BJ (cell line): ENCODE measurements at regions of chr20 and their contacts with region 1.

Region 1: DNA sequence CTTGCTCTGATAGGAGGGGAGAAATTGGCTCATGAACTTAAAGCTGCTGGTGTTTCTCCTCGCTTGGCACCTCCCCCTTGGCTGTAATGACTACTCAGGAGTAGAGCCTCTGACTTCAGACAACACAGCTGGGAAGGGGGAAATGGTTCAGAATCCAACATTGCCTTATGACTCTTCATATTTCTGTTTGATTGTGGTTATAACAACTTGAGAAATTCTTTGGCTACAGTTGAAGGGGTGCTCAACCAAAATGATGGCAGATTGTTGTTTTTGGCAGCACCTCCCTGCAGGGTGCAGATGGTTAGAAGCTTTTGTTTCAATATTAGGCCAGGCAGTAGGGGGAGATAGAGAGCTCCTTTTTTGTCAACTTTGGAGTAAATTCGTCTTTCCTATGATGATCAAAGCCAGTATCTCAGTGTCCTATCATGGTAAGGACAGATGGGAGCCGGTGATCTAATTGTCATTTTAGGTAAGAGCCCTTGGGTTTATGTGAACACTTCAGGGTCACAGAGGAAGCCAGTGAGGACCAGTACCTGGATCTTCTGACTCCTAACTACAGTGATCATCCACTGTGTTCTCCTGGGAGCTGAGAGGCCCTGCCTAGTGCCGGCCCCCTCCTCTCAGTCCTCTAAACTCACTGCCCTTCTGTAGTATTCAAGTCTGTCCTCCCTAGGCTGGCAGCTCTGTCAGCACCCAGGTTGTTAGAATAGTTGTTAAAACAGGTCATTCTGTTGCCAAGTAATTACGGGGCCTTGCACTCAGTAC is 39.9 kb downstream of the RPRD1B start:
- DNase-seq: peak; percentile 77
- H3K4me3 ChIP-seq: no peak overlapping the region
- H3K27me3 ChIP-seq: no peaks in the 10 kb centered on the region
- CTCF ChIP-seq: peak; percentile 76

Region 2: GRCh38 chr20:38057351-38057972 is 16.0 kb before region 1 on chr20:
- CTCF ChIA-PET with region 1: interaction called, 22 read pairs
- POLR2A ChIA-PET with region 1: no interaction called
- DNase-seq: no peak
- H3K4me3 ChIP-seq: no peak overlapping the region
- H3K27me3 ChIP-seq: no peaks in the 10 kb centered on the region
- CTCF ChIP-seq: peak; percentile 79

Region 3: GRCh38 chr20:38090061-38090460 is 16.6 kb after region 1 on chr20:
- CTCF ChIA-PET with region 1: interaction called, 36 read pairs
- POLR2A ChIA-PET with region 1: no interaction called
- DNase-seq: no peak
- H3K4me3 ChIP-seq: no peak overlapping the region
- H3K27me3 ChIP-seq: no peaks in the 10 kb centered on the region
- CTCF ChIP-seq: no peak

Region 4: DNA sequence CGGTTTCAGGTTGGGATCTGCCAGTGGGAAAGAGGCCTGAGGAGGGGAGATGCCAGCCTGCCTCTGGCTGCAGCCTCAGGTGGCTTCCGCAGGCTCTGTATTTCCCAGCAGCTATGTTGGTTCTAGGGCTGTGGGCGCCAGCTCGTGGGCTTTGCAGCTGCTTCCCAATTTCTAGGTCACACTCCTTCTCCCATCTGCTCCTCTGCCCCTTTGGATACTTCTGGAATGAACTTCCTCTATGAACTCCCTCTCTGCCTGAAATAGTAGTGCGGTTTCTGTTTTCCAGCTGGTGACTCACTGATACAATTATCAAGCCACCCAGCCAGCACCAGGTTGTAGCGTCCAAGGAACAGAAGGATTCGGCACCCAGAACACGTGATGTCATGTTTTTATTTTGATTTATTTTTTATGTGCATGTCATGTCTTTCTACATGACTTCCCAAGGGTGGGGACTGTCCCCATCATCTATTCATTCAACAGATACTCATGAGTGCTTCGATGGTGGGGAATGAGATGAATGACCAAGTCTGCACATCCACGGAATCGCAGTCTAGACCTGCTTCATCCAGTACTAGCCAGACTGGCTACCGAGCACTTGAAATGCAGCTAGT is 53.6 kb after region 1 on chr20:
- CTCF ChIA-PET with region 1: interaction called, 11 read pairs
- POLR2A ChIA-PET with region 1: no interaction called
- DNase-seq: no peak
- H3K4me3 ChIP-seq: no peak overlapping the region
- H3K27me3 ChIP-seq: no peaks in the 10 kb centered on the region
- CTCF ChIP-seq: no peak

Region 5: DNA sequence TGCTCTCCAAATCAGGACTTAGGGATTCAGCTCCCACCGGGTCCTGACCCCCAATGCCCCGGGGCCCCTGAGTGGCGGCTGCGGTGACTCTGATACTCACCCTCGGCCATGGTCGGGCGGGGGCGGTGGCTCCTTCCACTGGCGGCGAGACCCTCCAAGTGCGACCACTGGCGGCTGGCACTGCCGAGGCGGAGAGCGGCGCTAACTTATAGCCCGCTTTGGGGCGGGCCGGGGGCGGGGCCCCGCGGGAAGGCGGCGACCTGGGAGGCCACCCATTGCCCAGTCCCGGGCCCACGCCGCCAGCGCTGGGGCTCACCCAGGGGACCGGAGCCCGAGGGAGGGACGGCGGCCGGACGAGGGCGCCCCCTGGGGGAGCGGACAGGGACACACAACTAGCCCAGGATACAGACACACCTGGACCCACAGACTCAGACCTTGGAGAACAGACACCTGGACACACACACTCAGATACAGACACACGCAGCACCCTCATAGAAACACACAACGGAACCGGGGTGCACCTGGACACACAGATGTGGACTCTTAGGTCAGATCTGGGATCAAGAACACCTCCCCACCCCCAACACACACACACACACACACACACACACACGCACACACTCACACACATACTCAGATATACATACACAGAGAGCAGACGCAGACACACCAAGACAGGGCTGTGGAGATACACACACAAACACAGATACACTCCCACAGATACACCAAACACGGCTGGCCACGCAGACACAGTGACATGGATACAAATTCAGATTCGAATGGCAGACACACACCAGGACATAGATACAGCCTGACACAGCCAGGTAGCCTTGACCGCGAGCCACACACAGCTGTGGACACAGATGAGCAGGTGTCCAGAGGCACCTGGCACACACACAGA is 91.8 kb after region 1 on chr20 and contains the start of gene TGM2:
- CTCF ChIA-PET with region 1: interaction called, 82 read pairs
- POLR2A ChIA-PET with region 1: no interaction called
- DNase-seq: no peak
- H3K4me3 ChIP-seq: peak within 1 kb of the TSS; percentile 50
- H3K27me3 ChIP-seq: no peaks in the 10 kb centered on the region
- CTCF ChIP-seq: peak; percentile 77
- polyA plus RNA-seq, gene TGM2: 313 and 397 TPM in 2 replicates

Region 6: GRCh38 chr20:38270869-38271605 is 197.5 kb after region 1 on chr20:
- CTCF ChIA-PET with region 1: no interaction called
- POLR2A ChIA-PET with region 1: no interaction called
- DNase-seq: peak; percentile 85
- H3K4me3 ChIP-seq: no peak overlapping the region
- H3K27me3 ChIP-seq: no peaks in the 10 kb centered on the region
- CTCF ChIP-seq: no peak

Region 7: DNA sequence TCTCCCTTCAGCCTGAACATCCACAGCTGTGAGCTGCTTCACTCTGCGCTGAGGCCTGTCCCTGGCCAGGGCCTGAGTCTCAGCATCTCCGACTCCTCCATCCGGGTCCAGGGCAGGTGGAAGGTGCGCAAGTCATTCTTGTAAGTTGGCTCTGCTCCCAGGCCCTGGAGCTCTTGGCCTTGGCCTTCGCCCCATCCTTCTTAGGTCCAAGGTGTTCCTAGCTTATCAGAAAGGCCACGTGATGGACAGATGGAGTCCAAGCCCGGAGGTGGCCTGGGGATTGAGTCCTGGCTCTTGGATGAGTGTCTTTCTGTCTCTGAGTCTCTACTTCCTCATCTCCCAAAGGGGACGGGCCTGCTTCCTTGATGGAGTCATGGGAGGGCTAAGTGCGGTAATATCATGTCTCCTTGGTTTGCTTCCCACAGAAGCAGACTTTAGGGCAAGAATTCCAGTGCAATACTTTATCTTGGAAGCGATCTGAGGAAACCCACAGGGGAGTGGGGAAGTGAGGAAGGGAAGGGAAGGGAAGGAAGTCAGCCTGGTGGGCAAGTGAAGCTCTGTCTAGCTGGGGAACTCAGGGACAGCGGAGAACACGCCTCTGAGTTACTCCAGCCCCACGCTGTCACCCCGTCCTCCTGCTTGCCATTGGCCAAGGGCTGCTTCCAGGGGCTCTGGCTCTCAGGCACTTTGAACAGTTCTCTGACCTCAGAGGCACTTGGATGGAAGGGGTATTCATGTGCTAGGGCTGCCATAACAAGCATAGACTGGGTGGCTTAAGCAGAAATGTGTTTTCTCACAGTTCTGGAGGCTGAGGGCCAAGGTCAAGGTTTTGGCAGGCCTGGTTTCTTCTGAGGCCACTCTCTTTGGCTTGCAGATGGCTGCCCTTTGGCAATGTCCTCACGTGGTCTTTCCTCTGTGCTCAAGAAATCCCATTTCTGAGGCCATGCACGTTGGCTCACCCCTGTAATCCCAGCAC is 277.6 kb after region 1 on chr20:
- CTCF ChIA-PET with region 1: no interaction called
- POLR2A ChIA-PET with region 1: no interaction called
- DNase-seq: no peak
- H3K4me3 ChIP-seq: no peak overlapping the region
- H3K27me3 ChIP-seq: peaks cover 4% of the 10 kb centered on the region
- CTCF ChIP-seq: no peak